Head of caudate nucleus (tissue), 42 donors: ENCODE measurements at regions of chr13 and their contacts with region 1.

Region 1: GRCh38 chr13:98576963-98577822 is at the start of gene STK24:
- DNase-seq: peak in 38 of 42 donors; percentile 25 to 85 (median 65)

Region 2: DNA sequence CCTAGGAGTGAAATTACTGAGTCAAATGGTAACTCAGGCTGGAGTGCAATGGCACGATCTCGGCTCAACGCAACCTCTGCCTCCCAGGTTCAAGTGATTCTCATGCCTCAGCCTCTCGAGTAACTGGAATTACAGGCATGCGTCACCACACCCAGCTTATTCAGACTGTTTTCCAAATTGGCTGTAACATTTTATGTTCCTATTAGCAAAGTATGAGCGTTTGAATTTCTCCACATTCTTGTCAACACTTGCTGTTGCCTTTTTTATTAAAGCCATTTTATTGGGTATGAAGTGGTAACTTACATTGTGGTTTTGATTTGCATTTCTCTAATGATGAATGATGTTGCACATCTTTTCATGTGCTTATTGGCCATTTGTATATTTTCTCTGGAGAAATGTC is 615.9 kb before region 1 on chr13:
- intact Hi-C with region 1: no loop called
- DNase-seq: no peak

Region 3: GRCh38 chr13:98451676-98452470 is 125.3 kb before region 1 on chr13:
- intact Hi-C with region 1: loop called (anchors 2 kb)
- DNase-seq: peak in 34 of 42 donors; percentile 12 to 82 (median 53)

Region 4: DNA sequence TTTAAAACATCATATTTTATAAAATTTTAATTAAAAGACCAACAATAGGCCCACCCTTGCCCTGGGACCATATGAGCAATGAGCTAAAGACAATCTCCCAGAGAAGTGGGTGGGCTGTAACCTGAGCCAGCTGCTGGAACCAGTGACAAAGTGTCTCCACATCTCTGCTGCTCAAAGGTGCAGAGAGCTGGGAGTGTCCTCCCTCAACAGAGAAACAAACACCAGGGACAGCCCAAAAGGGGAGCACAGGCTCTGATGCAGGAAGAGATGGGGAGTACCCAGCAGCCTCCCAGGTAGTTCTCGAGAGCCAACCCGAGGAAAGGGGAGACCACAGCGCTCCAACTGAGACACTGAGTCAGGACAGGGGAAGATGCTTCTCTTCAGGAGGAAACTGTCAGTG is 361.6 kb after region 1 on chr13:
- intact Hi-C with region 1: no loop called
- DNase-seq: peak in 1 of 42 donors; percentile 39